ENCODE measurements at regions of chr14 and their contacts with region 1.

Region 1: DNA sequence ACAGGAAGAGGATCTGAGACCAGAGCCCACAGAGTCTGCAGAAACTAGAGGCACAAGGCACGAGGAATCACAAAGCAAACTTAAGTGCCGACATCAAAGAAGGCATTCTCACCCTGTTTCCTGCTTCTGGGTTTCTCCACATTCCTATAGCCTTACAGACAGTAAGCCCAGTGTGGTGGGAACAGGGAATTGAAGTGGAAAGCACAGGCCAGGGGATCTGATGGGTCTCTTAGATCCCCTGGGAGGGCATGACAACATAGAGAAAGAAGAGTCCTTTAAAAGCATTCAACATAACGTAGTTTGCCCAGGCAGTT is 75.6 kb upstream of the FRMD6 start:
- DNase-seq: peak; percentile 30
- ATAC-seq: peak; percentile 70
- H3K4me3 ChIP-seq: peak overlapping the region in 2 of 3 experiments; percentile 30 to 57; a peak in 3 of 6 replicates
- H3K27ac ChIP-seq: no peak overlapping the region
- H3K4me1 ChIP-seq: peaks cover 34% of the 10 kb centered on the region
- H3K27me3 ChIP-seq: peaks cover 0 to 2% of the 10 kb centered on the region in 2 experiments; a peak in 1 of 5 replicates
- CTCF ChIP-seq: no peak
- EP300 ChIP-seq: no peak
- POLR2A ChIP-seq: no peak
- RAD21 ChIP-seq: no peak

Region 2: DNA sequence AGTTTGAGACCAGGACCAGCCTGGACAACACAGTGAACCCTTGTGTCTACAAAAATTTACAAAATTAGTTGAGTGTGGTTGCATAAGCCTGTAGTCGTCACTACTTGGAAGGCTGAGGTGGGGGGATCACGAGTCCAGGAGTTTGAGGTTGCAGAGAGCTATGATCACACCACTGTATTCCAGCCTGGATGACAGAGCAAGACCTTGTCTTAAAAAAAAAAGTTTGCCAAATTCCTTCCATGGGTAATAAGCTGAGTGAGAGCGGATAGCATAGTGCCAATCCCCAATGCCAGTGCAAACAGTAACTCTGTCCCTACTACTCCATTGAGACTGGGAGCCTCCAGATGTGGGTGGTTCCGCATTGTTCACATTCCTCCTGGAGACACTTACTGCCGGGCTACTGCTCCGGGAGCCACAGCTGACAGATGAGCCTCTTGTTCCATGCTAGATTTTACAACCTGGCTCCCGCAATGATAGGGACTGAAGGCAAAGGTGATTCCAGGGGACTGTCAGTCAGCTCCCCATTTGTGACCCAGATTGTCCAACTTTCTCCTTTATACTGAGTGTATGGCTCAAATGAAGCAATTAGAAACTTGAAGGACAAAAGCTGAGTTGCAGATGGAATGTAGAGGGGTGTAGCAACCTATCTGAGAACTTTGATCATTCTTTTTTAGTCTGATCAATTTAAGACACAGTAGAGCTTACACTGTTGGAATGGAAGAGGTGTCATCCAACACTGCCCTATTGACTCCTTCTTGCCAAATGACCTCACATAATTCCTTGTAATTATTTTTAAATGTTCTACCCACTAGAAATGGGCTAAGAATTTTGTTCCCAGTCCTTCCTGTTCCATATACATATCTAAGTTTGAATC is 62.2 kb after region 1 on chr14:
- CTCF ChIA-PET with region 1: no interaction called
- POLR2A ChIA-PET with region 1: no interaction called
- in situ Hi-C with region 1: no loop called
- intact Hi-C with region 1: loop called (anchors 5 kb)
- DNase-seq: peak; percentile 75
- ATAC-seq: peak; percentile 99
- H3K4me3 ChIP-seq: no peak overlapping the region; a peak in 1 of 6 replicates
- H3K27ac ChIP-seq: no peak overlapping the region
- H3K4me1 ChIP-seq: peaks cover 12% of the 10 kb centered on the region
- H3K27me3 ChIP-seq: no peaks in the 10 kb centered on the region
- CTCF ChIP-seq: no peak
- EP300 ChIP-seq: no peak
- POLR2A ChIP-seq: no peak
- RAD21 ChIP-seq: no peak